IMR-90 (cell line): ENCODE measurements at regions of chr9 and their contacts with region 1.

Region 1: GRCh38 chr9:15048772-15049171 is 138.5 kb upstream of the FREM1 start:
- DNase-seq: no peak
- ATAC-seq: no peak
- H3K4me3 ChIP-seq: no peak overlapping the region
- H3K27ac ChIP-seq: no peak overlapping the region
- H3K4me1 ChIP-seq: no peaks in the 10 kb centered on the region
- H3K27me3 ChIP-seq: no peaks in the 10 kb centered on the region
- CTCF ChIP-seq: no peak
- POLR2A ChIP-seq: no peak
- RAD21 ChIP-seq: no peak

Region 2: DNA sequence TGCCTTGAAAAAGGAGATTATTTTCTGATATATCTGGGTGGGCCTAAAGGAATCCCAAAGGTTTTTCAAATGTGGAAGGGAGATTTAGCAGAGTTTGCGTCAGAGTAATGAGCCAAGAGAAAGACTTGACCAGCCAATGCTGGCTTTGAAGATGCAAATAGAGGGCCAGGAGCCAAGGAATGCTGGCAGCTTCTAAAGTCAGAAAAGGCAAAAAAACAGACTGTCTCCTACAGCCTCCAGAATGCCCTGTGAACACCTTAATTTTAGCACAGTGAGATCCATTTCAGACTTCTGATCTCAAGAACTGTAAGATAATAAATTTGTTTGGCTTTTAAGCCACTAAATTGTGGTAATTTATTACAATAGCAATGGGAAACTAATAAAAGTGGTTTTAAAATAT is 15.9 kb before region 1 on chr9:
- CTCF ChIA-PET with region 1: no interaction called
- POLR2A ChIA-PET with region 1: no interaction called
- dilution Hi-C with region 1: no loop called
- in situ Hi-C with region 1: no loop called
- intact Hi-C with region 1: loop called (anchors 2 kb)
- DNase-seq: no peak
- ATAC-seq: no peak
- H3K4me3 ChIP-seq: no peak overlapping the region
- H3K27ac ChIP-seq: no peak overlapping the region
- H3K4me1 ChIP-seq: no peaks in the 10 kb centered on the region
- H3K27me3 ChIP-seq: no peaks in the 10 kb centered on the region
- CTCF ChIP-seq: no peak
- POLR2A ChIP-seq: no peak
- RAD21 ChIP-seq: no peak